MCF 10A (cell line): ENCODE measurements at regions of chr16 and their contacts with region 1.

Region 1: GRCh38 chr16:56450986-56451752 is at the starts of genes NUDT21 and OGFOD1:
- DNase-seq: peak; percentile 98
- H3K4me3 Mint-ChIP-seq: peak within 1 kb of the TSS; percentile 83
- H3K27ac Mint-ChIP-seq: peak within 1 kb of the TSS; percentile 80
- H3K4me1 Mint-ChIP-seq: peaks cover 24% of the 10 kb centered on the region
- H3K27me3 Mint-ChIP-seq: no peaks in the 10 kb centered on the region
- CTCF ChIP-seq: no peak
- total RNA-seq, gene NUDT21: 81.7 and 83.4 TPM in 2 replicates
- total RNA-seq, gene OGFOD1: 68.5 and 72.5 TPM in 2 replicates

Region 2: GRCh38 chr16:56382901-56383355 is 68.2 kb before region 1 on chr16:
- CTCF ChIA-PET with region 1: no interaction called
- POLR2A ChIA-PET with region 1: interaction called, 10 read pairs
- intact Hi-C with region 1: no loop called
- DNase-seq: peak; percentile 86
- H3K4me3 Mint-ChIP-seq: peak overlapping the region; percentile 19
- H3K27ac Mint-ChIP-seq: peak overlapping the region; percentile 3
- H3K4me1 Mint-ChIP-seq: peaks cover 17% of the 10 kb centered on the region
- H3K27me3 Mint-ChIP-seq: no peaks in the 10 kb centered on the region
- CTCF ChIP-seq: no peak

Region 3: GRCh38 chr16:56409195-56409594 is 42.0 kb before region 1 on chr16:
- CTCF ChIA-PET with region 1: no interaction called
- POLR2A ChIA-PET with region 1: interaction called, 13 read pairs
- intact Hi-C with region 1: no loop called
- DNase-seq: peak; percentile 83
- H3K4me3 Mint-ChIP-seq: no peak overlapping the region
- H3K27ac Mint-ChIP-seq: no peak overlapping the region
- H3K4me1 Mint-ChIP-seq: peaks cover 20% of the 10 kb centered on the region
- H3K27me3 Mint-ChIP-seq: no peaks in the 10 kb centered on the region
- CTCF ChIP-seq: no peak

Region 4: DNA sequence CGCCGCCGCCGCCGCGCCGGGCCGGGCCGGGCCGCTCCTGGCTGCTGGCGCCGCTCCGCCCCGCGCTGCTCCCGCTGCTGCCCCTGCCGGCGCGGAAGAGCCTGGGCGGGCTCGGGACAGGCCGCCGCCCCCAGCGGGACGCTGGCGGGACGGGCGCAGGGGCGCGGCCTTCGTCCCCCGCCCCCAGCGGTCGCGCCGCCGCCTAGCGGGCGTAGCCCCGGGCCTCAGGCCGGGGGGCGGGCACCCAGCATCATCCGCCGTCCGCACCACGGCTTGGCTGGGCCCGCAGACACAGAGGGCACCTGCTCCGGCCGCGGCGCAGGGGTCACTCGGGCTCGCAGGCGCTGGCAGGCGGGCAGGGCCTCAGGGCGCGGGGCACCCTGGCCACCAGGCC is 25.7 kb before region 1 on chr16 and contains the start of gene AMFR:
- CTCF ChIA-PET with region 1: no interaction called
- POLR2A ChIA-PET with region 1: interaction called, 34 read pairs
- intact Hi-C with region 1: loop called (anchors 2 kb)
- DNase-seq: peak; percentile 76
- H3K4me3 Mint-ChIP-seq: peak within 1 kb of the TSS; percentile 91
- H3K27ac Mint-ChIP-seq: peak within 1 kb of the TSS; percentile 87
- H3K4me1 Mint-ChIP-seq: peaks cover 35% of the 10 kb centered on the region
- H3K27me3 Mint-ChIP-seq: no peaks in the 10 kb centered on the region
- CTCF ChIP-seq: peak; percentile 12
- total RNA-seq, gene AMFR: 97.2 and 109 TPM in 2 replicates

Region 5: GRCh38 chr16:56436258-56436657 is 14.9 kb before region 1 on chr16:
- CTCF ChIA-PET with region 1: interaction called, 3 read pairs
- POLR2A ChIA-PET with region 1: interaction called, 29 read pairs
- intact Hi-C with region 1: no loop called
- DNase-seq: no peak
- H3K4me3 Mint-ChIP-seq: no peak overlapping the region
- H3K27ac Mint-ChIP-seq: no peak overlapping the region
- H3K4me1 Mint-ChIP-seq: no peaks in the 10 kb centered on the region
- H3K27me3 Mint-ChIP-seq: no peaks in the 10 kb centered on the region
- CTCF ChIP-seq: no peak

Region 6: GRCh38 chr16:56475201-56475600 is 24.0 kb after region 1 on chr16:
- CTCF ChIA-PET with region 1: interaction called, 3 read pairs
- POLR2A ChIA-PET with region 1: interaction called, 14 read pairs
- intact Hi-C with region 1: no loop called
- DNase-seq: no peak
- H3K4me3 Mint-ChIP-seq: no peak overlapping the region
- H3K27ac Mint-ChIP-seq: no peak overlapping the region
- H3K4me1 Mint-ChIP-seq: peaks cover 9% of the 10 kb centered on the region
- H3K27me3 Mint-ChIP-seq: no peaks in the 10 kb centered on the region
- CTCF ChIP-seq: no peak